ENCODE measurements at regions of chr6 and their contacts with region 1.

Region 1: GRCh38 chr6:71510057-71510713 is 221.6 kb downstream of the OGFRL1 start:
- DNase-seq: no peak
- H3K4me3 ChIP-seq: no peak overlapping the region
- CTCF ChIP-seq: peak; percentile 66

Region 2: DNA sequence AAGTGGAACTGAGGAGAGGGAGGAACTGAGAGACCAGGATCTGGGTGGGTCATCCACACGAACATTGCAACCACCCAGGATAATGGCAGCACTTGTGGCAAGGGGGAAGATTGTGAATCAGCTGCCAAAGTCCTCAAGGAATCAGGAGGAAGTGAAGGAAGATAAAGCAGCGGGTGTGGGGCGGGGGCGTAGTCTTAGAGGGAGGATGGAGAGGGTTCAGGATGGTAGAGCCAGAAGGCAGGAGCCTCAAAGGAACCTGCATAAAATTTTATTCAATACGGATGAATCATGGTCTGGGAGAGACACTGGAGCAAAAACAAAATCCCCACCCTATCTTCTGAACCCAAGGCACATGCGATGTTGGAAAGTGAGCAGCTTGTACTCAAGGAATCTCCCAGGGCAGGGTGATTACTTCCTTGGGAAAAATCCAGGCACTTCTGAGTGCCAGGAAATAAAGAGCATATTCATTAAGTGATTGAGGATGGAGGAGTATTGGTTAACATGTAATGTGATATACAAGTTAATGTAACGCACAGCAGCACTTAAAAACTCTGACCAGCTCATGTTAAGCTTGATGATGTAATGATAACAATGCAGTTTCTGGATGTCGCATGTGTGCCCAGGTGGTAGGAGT is 471.4 kb before region 1 on chr6:
- CTCF ChIA-PET with region 1: no interaction called
- POLR2A ChIA-PET with region 1: no interaction called
- DNase-seq: no peak
- H3K4me3 ChIP-seq: no peak overlapping the region
- CTCF ChIP-seq: no peak

Region 3: GRCh38 chr6:71190809-71191208 is 319.4 kb before region 1 on chr6:
- CTCF ChIA-PET with region 1: interaction called, 17 read pairs
- POLR2A ChIA-PET with region 1: no interaction called
- DNase-seq: no peak
- H3K4me3 ChIP-seq: no peak overlapping the region
- CTCF ChIP-seq: no peak

Region 4: DNA sequence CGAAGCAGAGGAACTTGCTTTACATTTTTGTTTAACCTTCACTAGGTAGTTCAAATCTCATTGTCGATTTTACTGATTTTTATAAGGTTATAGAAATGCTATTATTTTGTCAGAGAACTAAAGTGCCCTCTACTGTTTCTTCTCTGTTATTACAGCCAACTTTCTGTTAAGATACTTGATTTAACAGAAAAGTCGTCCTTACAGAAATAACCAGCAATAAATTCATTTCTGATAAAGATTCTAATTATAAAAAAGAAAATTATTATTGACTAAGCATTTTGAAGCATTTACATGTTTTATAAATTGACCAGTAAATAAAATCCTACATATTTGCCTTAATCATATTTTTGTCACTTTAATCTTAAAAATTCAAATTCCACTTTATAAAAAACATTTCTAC is 160.8 kb before region 1 on chr6:
- CTCF ChIA-PET with region 1: interaction called, 10 read pairs
- POLR2A ChIA-PET with region 1: no interaction called
- DNase-seq: no peak
- H3K4me3 ChIP-seq: no peak overlapping the region
- CTCF ChIP-seq: peak; percentile 35

Region 5: GRCh38 chr6:71383901-71384489 is 126.2 kb before region 1 on chr6:
- CTCF ChIA-PET with region 1: interaction called, 355 read pairs
- POLR2A ChIA-PET with region 1: no interaction called
- DNase-seq: no peak
- H3K4me3 ChIP-seq: no peak overlapping the region
- CTCF ChIP-seq: no peak

Region 6: GRCh38 chr6:71489747-71490315 is 20.4 kb before region 1 on chr6:
- CTCF ChIA-PET with region 1: interaction called, 12 read pairs
- POLR2A ChIA-PET with region 1: interaction called, 3 read pairs
- DNase-seq: peak; percentile 76
- H3K4me3 ChIP-seq: no peak overlapping the region
- CTCF ChIP-seq: no peak

Region 7: DNA sequence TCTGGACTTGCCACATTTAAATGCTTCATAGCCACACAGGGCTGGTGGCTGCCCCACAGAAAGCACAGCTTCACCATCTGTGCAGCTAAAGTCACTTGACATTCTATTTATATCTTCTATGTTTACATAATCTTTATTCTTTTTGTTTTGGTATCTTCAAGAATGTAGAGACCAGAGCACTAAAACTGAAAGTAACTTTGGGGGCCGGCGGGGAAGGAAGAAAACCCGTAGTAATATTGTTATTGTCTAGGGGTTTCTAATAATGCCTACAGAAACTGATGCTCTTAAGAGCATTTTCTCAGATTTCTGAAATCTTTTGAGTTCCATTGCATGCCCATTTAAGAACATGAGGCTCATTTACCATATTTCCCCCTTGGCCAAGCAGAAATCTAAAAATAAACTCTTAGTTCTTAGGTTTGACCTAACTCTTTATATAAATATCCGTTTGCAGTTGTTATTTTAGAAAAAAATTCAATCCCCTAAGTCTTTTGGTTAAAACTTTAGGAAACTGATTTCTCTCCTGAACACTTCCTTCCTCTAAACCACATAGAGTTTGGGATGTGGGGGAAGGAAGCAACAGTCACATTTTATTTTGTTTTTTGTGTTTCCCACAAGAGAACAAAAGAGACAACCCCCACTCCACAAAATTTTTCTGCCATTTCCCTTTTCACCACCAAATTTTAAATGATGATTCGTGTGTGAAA is 14.0 kb before region 1 on chr6:
- CTCF ChIA-PET with region 1: interaction called, 12 read pairs
- POLR2A ChIA-PET with region 1: no interaction called
- DNase-seq: no peak
- H3K4me3 ChIP-seq: no peak overlapping the region
- CTCF ChIP-seq: no peak

Region 8: DNA sequence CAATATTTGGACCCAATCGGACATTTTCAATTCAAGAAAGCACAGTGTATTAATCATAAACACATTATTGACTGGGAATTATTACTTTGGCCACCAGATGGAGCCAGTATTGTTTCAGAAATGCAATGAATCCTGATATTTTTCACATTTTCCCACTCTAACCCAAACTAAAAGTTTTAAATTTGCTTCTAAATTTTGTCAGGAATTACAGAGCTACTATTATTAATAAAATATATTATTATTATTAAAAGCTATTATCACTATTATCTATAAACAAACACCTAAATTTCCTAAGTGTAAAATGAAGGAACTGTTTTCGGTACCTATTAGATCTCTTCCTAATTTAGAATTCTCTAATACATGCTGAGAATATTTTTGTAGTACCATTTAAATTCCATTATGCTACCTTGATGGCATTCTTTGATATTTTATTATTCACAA is 23.8 kb after region 1 on chr6:
- CTCF ChIA-PET with region 1: interaction called, 18 read pairs
- POLR2A ChIA-PET with region 1: no interaction called
- DNase-seq: no peak
- H3K4me3 ChIP-seq: no peak overlapping the region
- CTCF ChIP-seq: peak; percentile 32

Measured in AG04449 (cell line).